Natural killer cell (primary cell): ENCODE measurements at regions of chr1 and their contacts with region 1.

Region 1: GRCh38 chr1:154607609-154608396 is at the start of gene ADAR:
- DNase-seq: peak; percentile 84 to 97
- ATAC-seq: peak; percentile 89 to 95 (median 90)
- H3K4me3 ChIP-seq: peak within 1 kb of the TSS; percentile 77
- H3K4me3 Mint-ChIP-seq: peak within 1 kb of the TSS; percentile 89
- H3K27ac ChIP-seq: peak within 1 kb of the TSS; percentile 91
- H3K27ac Mint-ChIP-seq: peak within 1 kb of the TSS; percentile 87 to 95
- H3K4me1 ChIP-seq: peaks cover 47% of the 10 kb centered on the region
- H3K4me1 Mint-ChIP-seq: peaks cover 48 to 64% of the 10 kb centered on the region in 2 donors
- H3K27me3 ChIP-seq: no peaks in the 10 kb centered on the region
- H3K27me3 Mint-ChIP-seq: no peaks in the 10 kb centered on the region
- CTCF ChIP-seq: no peak
- total RNA-seq, gene ADAR: 260 to 281 (median 265) TPM

Region 2: GRCh38 chr1:154627257-154628120 is 19.7 kb after region 1 on chr1:
- intact Hi-C with region 1: loop called (anchors 1 kb)
- DNase-seq: peak; percentile 89 to 94
- ATAC-seq: peak; percentile 72 to 82 (median 77)
- H3K4me3 ChIP-seq: peak overlapping the region; percentile 97
- H3K4me3 Mint-ChIP-seq: peak overlapping the region; percentile 95
- H3K27ac ChIP-seq: peak overlapping the region; percentile 99
- H3K27ac Mint-ChIP-seq: peak overlapping the region; percentile 89 to 94
- H3K4me1 ChIP-seq: peaks cover 11% of the 10 kb centered on the region
- H3K4me1 Mint-ChIP-seq: peaks cover 15 to 31% of the 10 kb centered on the region in 2 donors
- H3K27me3 ChIP-seq: no peaks in the 10 kb centered on the region
- H3K27me3 Mint-ChIP-seq: peaks cover 10 to 13% of the 10 kb centered on the region in 2 donors
- CTCF ChIP-seq: no peak

Region 3: DNA sequence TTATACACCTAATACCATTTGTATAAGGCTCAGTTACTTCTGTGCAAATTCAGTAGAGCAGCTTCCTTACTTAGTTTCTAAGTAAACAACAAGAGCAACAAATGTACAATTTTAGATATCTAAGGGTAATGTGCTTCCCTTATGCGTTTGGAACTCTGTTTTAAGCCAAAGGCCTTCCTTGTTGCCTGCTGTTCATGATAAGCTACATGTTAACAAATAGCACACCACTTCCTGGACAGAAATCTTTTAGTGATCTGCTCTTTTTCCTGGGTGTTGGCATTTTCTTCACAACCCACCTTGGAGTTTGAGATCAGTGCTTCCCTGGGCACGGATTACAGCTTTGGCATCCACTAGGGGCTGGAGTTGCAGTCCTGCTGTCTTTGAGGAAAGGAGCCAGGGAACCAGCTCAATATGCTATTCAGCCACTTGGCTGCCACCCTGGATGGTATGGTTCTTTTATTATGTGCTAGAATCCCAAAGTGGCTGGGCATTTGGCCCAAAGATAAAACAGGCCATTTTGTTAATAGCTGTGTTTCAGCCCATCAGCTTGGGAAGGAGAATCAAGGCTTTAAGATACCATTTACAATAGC is 55.8 kb after region 1 on chr1:
- intact Hi-C with region 1: no loop called
- DNase-seq: no peak
- ATAC-seq: no peak
- H3K4me3 ChIP-seq: no peak overlapping the region
- H3K4me3 Mint-ChIP-seq: no peak overlapping the region
- H3K27ac ChIP-seq: no peak overlapping the region
- H3K27ac Mint-ChIP-seq: no peak overlapping the region
- H3K4me1 ChIP-seq: no peaks in the 10 kb centered on the region
- H3K4me1 Mint-ChIP-seq: no peaks in the 10 kb centered on the region
- H3K27me3 ChIP-seq: peaks cover 2% of the 10 kb centered on the region
- H3K27me3 Mint-ChIP-seq: peaks cover 14 to 43% of the 10 kb centered on the region in 2 donors
- CTCF ChIP-seq: no peak